ENCODE measurements at regions of chr1 and their contacts with region 1.

Region 1: GRCh38 chr1:175186433-175187142 is 6.0 kb downstream of the KIAA0040 start:
- H3K4me3 Mint-ChIP-seq: peak overlapping the region; percentile 21
- H3K27ac Mint-ChIP-seq: peak overlapping the region; percentile 83
- H3K4me1 Mint-ChIP-seq: peaks cover 87% of the 10 kb centered on the region
- H3K27me3 Mint-ChIP-seq: no peaks in the 10 kb centered on the region

Region 2: GRCh38 chr1:175200678-175201521 is 14.3 kb after region 1 on chr1:
- intact Hi-C with region 1: loop called (anchors 2 kb)
- H3K4me3 Mint-ChIP-seq: peak overlapping the region; percentile 17
- H3K27ac Mint-ChIP-seq: peak overlapping the region; percentile 74
- H3K4me1 Mint-ChIP-seq: peaks cover 32% of the 10 kb centered on the region
- H3K27me3 Mint-ChIP-seq: no peaks in the 10 kb centered on the region

Region 3: GRCh38 chr1:175237389-175237788 is 50.8 kb after region 1 on chr1:
- intact Hi-C with region 1: no loop called
- H3K4me3 Mint-ChIP-seq: no peak overlapping the region
- H3K27ac Mint-ChIP-seq: no peak overlapping the region
- H3K4me1 Mint-ChIP-seq: peaks cover 7% of the 10 kb centered on the region
- H3K27me3 Mint-ChIP-seq: no peaks in the 10 kb centered on the region